Right ventricle myocardium inferior (tissue), 1 donor: ENCODE measurements at regions of chr17 and their contacts with region 1.

Region 1: DNA sequence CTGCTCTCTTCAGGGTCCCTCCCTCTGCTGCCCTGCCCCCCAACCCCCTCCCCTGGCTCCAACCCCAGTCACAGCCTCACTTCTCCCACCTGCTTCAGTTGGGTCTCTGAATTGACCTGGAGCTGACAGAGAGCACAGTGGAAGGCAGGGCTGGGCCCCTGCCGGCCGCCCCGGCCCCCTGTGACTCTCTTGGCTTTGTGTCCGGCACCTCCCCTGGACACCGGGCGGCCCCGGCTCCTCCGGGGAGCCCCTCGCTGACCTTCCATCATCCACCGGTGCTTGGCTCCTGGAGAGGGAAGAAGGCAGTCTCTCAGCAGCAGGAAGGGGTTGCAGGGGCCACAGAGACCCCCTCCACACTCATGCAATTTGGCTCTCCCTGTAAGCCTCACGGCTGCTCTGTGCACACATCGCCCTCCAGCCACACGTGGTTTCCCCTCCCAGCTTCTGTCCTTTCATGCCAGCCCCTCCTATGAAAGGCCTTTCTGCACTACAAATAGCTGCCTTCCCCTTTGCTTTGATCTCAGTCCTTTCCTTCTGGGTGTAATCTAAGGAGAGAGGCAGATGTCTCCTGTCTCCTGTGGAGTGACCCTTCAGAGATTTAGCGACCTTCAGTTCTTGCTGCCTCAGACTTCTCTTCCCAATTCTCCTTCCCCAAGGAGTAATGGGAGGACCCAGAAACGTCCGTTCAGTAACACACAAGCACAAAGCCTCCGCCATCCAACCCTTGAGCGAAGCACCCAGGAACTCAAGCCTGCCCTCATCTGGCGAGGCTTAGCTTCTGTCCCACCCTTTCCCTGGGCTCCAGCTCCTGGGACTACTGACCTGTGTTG is 8.3 kb downstream of the NKIRAS2 start:
- DNase-seq: no peak
- ATAC-seq: no peak

Region 2: GRCh38 chr17:42061646-42062487 is 33.7 kb after region 1 on chr17:
- intact Hi-C with region 1: loop called (anchors 5 kb)
- DNase-seq: no peak
- ATAC-seq: no peak

Region 3: GRCh38 chr17:42329025-42329976 is 301.1 kb after region 1 on chr17:
- intact Hi-C with region 1: no loop called
- DNase-seq: no peak
- ATAC-seq: no peak